ENCODE measurements at regions of chr20 and their contacts with region 1.

Region 1: GRCh38 chr20:8972963-8973705 is 95.8 kb upstream of the PLCB4 start:
- DNase-seq: no peak
- H3K4me3 Mint-ChIP-seq: no peak overlapping the region
- H3K27ac Mint-ChIP-seq: no peak overlapping the region
- H3K4me1 Mint-ChIP-seq: no peaks in the 10 kb centered on the region
- H3K27me3 Mint-ChIP-seq: no peaks in the 10 kb centered on the region
- CTCF ChIP-seq: no peak

Region 2: GRCh38 chr20:8901237-8902025 is 71.7 kb before region 1 on chr20:
- CTCF ChIA-PET with region 1: interaction called, 11 read pairs
- intact Hi-C with region 1: no loop called
- DNase-seq: no peak
- H3K4me3 Mint-ChIP-seq: no peak overlapping the region
- H3K27ac Mint-ChIP-seq: no peak overlapping the region
- H3K4me1 Mint-ChIP-seq: no peaks in the 10 kb centered on the region
- H3K27me3 Mint-ChIP-seq: no peaks in the 10 kb centered on the region
- CTCF ChIP-seq: no peak

Region 3: GRCh38 chr20:9038791-9039535 is 65.8 kb after region 1 on chr20:
- CTCF ChIA-PET with region 1: no interaction called
- intact Hi-C with region 1: no loop called
- DNase-seq: no peak
- H3K4me3 Mint-ChIP-seq: no peak overlapping the region
- H3K27ac Mint-ChIP-seq: no peak overlapping the region
- H3K4me1 Mint-ChIP-seq: no peaks in the 10 kb centered on the region
- H3K27me3 Mint-ChIP-seq: no peaks in the 10 kb centered on the region
- CTCF ChIP-seq: no peak

Region 4: GRCh38 chr20:9427430-9428291 is 454.5 kb after region 1 on chr20:
- CTCF ChIA-PET with region 1: no interaction called
- intact Hi-C with region 1: no loop called
- DNase-seq: no peak
- H3K4me3 Mint-ChIP-seq: no peak overlapping the region
- H3K27ac Mint-ChIP-seq: no peak overlapping the region
- H3K4me1 Mint-ChIP-seq: no peaks in the 10 kb centered on the region
- H3K27me3 Mint-ChIP-seq: no peaks in the 10 kb centered on the region
- CTCF ChIP-seq: no peak